Endothelial cell of umbilical vein (primary cell): ENCODE measurements at regions of chr5 and their contacts with region 1.

Region 1: DNA sequence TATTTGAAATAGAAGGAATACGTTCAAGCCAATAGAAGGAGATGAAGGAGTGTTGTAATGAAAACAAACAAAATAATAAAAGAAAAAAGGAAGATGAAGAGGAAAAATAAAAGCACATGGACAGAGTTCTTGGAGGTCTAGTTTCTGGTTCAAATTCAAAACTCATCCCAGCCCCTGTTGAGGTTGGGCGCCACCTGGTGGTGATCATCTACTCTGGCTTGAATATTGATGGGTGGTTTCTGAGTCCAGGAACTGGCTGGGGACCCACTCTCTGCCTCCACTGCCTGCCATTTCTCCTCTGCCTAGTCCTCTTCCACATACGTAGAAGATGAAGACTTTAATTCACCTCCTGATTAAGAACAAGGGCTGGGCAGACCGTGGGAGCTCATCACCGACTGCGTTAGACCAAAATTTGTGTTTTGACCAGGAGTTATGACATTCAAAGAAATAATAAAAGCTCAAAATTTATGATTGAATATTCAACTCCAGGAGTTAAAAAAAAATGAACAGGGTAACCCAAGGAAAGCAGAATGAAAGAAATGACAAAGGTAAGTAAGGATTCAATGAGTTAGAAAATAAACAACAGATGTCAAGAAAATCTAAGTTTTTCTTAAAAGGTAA is 99.0 kb upstream of the SLC1A3 start:
- DNase-seq: peak; percentile 53
- H3K4me3 ChIP-seq: no peak overlapping the region
- H3K27ac ChIP-seq: no peak overlapping the region
- H3K4me1 ChIP-seq: no peaks in the 10 kb centered on the region
- H3K27me3 ChIP-seq: no peaks in the 10 kb centered on the region
- CTCF ChIP-seq: peak; percentile 78 to 84
- POLR2A ChIP-seq: no peak

Region 2: GRCh38 chr5:36264202-36264760 is 243.2 kb before region 1 on chr5:
- CTCF ChIA-PET with region 1: interaction called, 3 read pairs
- POLR2A ChIA-PET with region 1: no interaction called
- dilution Hi-C with region 1: no loop called
- intact Hi-C with region 1: loop called (anchors 1 kb)
- DNase-seq: no peak
- H3K4me3 ChIP-seq: no peak overlapping the region
- H3K27ac ChIP-seq: no peak overlapping the region
- H3K4me1 ChIP-seq: no peaks in the 10 kb centered on the region
- H3K27me3 ChIP-seq: peaks cover 2 to 5% of the 10 kb centered on the region in 2 experiments
- CTCF ChIP-seq: no peak
- POLR2A ChIP-seq: no peak

Region 3: GRCh38 chr5:36494756-36495601 is 12.5 kb before region 1 on chr5:
- CTCF ChIA-PET with region 1: interaction called, 14 read pairs
- POLR2A ChIA-PET with region 1: no interaction called
- dilution Hi-C with region 1: no loop called
- intact Hi-C with region 1: no loop called
- DNase-seq: no peak
- H3K4me3 ChIP-seq: no peak overlapping the region
- H3K27ac ChIP-seq: no peak overlapping the region
- H3K4me1 ChIP-seq: no peaks in the 10 kb centered on the region
- H3K27me3 ChIP-seq: no peaks in the 10 kb centered on the region
- CTCF ChIP-seq: no peak
- POLR2A ChIP-seq: no peak

Region 4: GRCh38 chr5:36590513-36591286 is 83.3 kb after region 1 on chr5:
- CTCF ChIA-PET with region 1: no interaction called
- POLR2A ChIA-PET with region 1: no interaction called
- dilution Hi-C with region 1: no loop called
- intact Hi-C with region 1: no loop called
- DNase-seq: no peak
- H3K4me3 ChIP-seq: no peak overlapping the region
- H3K27ac ChIP-seq: no peak overlapping the region
- H3K4me1 ChIP-seq: no peaks in the 10 kb centered on the region
- H3K27me3 ChIP-seq: peaks cover 3 to 5% of the 10 kb centered on the region in 2 experiments
- CTCF ChIP-seq: no peak
- POLR2A ChIP-seq: no peak

Region 5: DNA sequence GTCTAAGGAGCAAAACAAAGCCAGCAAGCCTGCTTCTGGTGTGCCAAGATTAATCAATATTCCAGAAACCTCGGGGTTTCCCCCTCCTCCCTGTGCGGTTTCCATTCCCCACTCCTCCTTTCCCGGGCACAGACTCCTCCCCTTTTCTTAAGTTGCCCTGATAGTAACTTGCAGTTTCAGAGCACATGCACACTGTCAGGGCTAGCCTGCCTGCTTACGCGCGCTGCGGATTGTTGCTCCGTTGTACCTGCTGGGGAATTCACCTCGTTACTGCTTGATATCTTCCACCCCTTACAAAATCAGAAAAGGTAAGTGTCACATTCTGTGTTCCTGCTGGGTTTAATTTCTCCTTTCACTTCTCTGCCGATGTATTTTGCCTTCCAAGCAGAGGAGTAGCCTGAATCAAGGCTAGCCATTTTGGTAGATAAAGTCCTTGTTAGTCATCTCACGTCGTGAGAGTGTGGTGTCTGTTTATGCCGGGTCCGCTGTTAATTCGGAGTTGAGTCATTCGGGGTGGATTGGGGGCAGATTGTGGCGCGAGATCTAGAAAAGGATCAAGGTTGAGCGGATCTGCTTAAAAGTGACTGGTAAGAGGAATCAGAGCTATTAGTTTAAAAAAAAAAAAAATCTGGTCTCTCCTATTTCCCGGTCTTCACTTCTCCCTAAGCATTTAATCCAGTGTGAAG is 99.1 kb after region 1 on chr5 and contains the start of gene SLC1A3:
- CTCF ChIA-PET with region 1: no interaction called
- POLR2A ChIA-PET with region 1: no interaction called
- dilution Hi-C with region 1: no loop called
- intact Hi-C with region 1: loop called (anchors 5 kb)
- DNase-seq: peak; percentile 75
- H3K4me3 ChIP-seq: peak within 1 kb of the TSS; percentile 26 to 64 (median 37)
- H3K27ac ChIP-seq: no peak within 1 kb of the TSS
- H3K4me1 ChIP-seq: peaks cover 6% of the 10 kb centered on the region
- H3K27me3 ChIP-seq: peaks cover 17 to 36% of the 10 kb centered on the region in 2 experiments
- CTCF ChIP-seq: no peak
- POLR2A ChIP-seq: no peak
- total RNA-seq, gene SLC1A3: 0.44 TPM in 1 of 2 replicates, not detected in the other